ENCODE measurements at regions of chr6 and their contacts with region 1.

Region 1: DNA sequence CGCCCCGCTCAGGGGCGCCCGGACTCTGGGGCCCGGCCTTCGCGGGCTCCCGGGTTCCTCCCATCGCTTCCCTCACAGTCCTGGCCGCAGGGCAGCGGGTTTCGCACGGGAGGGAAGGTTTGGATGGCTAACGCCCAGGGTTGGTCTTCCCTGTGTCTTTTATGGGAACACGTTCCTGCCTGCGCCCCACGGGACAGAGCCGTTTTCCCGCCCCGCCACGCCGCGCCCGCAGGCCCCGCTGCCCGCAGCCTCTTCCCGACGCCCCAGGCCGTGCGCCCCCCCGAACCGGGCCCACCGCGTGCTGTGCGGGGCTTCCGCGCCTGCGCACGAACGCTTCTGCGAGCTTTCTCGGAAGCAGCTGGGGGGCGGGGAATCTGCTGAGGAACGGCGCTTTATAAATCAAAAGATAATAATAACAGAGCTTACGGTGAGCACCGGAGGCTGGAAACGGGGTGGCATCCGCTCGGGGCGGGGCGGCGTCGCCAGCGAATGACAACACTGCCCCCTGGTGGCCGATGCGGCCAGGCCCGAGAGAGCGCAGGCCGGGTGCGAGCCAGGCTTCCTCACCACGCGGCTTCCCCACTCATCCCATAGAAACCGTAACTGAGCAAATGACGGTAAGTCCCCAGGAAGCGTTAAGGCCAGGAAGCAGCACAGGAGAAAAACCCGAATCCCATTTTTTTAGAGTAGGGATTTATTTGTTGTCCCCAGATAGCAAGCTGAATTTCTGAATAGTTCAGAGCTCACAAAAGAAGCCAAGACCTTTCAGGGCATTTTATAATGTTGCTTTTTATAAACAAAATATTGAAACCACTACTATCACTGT is 116.4 kb downstream of the MYLK4 start:
- DNase-seq: peak; percentile 93
- H3K4me3 ChIP-seq: peak overlapping the region in 2 of 3 experiments; percentile 13 to 15
- H3K27ac ChIP-seq: peak overlapping the region; percentile 44
- H3K4me1 ChIP-seq: peaks cover 15% of the 10 kb centered on the region
- H3K27me3 ChIP-seq: no peaks in the 10 kb centered on the region
- CTCF ChIP-seq: peak; percentile 98 to 99
- POLR2A ChIP-seq: no peak

Region 2: GRCh38 chr6:1604158-1605030 is 1030.0 kb before region 1 on chr6:
- CTCF ChIA-PET with region 1: interaction called, 22 read pairs
- POLR2A ChIA-PET with region 1: no interaction called
- dilution Hi-C with region 1: no loop called
- intact Hi-C with region 1: loop called (anchors 2 kb)
- DNase-seq: peak; percentile 63
- H3K4me3 ChIP-seq: peak overlapping the region; percentile 33 to 38 (median 36)
- H3K27ac ChIP-seq: no peak overlapping the region
- H3K4me1 ChIP-seq: peaks cover 3% of the 10 kb centered on the region
- H3K27me3 ChIP-seq: peaks cover 12 to 16% of the 10 kb centered on the region in 2 experiments
- CTCF ChIP-seq: peak; percentile 87 to 91
- POLR2A ChIP-seq: no peak

Region 3: GRCh38 chr6:1787894-1788293 is 846.5 kb before region 1 on chr6:
- CTCF ChIA-PET with region 1: no interaction called
- POLR2A ChIA-PET with region 1: no interaction called
- dilution Hi-C with region 1: no loop called
- intact Hi-C with region 1: loop called (anchors 5 kb)
- DNase-seq: peak; percentile 92
- H3K4me3 ChIP-seq: no peak overlapping the region
- H3K27ac ChIP-seq: peak overlapping the region; percentile 84
- H3K4me1 ChIP-seq: peaks cover 45% of the 10 kb centered on the region
- H3K27me3 ChIP-seq: no peaks in the 10 kb centered on the region
- CTCF ChIP-seq: no peak
- POLR2A ChIP-seq: no peak

Region 4: GRCh38 chr6:2196079-2196679 is 438.2 kb before region 1 on chr6:
- CTCF ChIA-PET with region 1: interaction called, 14 read pairs
- POLR2A ChIA-PET with region 1: no interaction called
- dilution Hi-C with region 1: no loop called
- intact Hi-C with region 1: loop called (anchors 1 kb)
- DNase-seq: peak; percentile 88
- H3K4me3 ChIP-seq: no peak overlapping the region
- H3K27ac ChIP-seq: no peak overlapping the region
- H3K4me1 ChIP-seq: peaks cover 11% of the 10 kb centered on the region
- H3K27me3 ChIP-seq: no peaks in the 10 kb centered on the region
- CTCF ChIP-seq: peak; percentile 50 to 53
- POLR2A ChIP-seq: no peak

Region 5: DNA sequence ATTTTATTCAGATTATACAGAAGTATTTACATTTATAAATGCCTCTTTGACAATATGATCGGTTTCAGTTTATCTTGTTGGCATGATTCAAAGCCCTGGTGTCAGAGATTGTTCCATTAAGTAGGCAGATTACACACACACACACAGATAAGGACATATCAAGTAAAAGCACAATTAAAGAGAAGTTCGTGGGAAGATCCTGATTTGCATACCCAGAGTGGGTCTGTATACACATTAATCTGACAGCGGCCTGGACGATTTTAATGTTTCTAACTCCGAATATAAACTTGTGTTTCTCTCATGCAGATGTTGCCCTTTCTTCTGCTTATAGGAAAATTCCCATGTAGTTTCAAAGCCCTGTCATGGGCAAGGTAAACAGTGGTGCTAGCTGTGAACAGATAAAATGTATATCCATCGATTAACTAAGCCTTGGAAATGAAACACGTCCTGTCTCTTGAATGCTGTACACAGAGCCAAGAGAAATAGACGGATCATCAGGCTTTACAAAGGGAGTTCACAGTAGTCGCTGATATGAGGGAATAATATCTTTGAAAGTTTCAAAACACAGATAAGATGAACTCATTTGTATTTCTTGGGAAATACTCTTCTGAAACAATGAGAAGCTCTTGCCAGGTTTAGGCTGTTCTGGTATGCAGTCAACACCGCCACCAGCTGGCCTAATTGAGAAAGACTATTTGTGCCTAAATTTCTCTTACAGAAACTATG is 280.8 kb before region 1 on chr6:
- CTCF ChIA-PET with region 1: interaction called, 52 read pairs
- POLR2A ChIA-PET with region 1: no interaction called
- dilution Hi-C with region 1: no loop called
- intact Hi-C with region 1: loop called (anchors 1 kb)
- DNase-seq: peak; percentile 92
- H3K4me3 ChIP-seq: peak overlapping the region in 1 of 3 experiments; percentile 6
- H3K27ac ChIP-seq: no peak overlapping the region
- H3K4me1 ChIP-seq: peaks cover 6% of the 10 kb centered on the region
- H3K27me3 ChIP-seq: no peaks in the 10 kb centered on the region
- CTCF ChIP-seq: peak; percentile 64 to 66
- POLR2A ChIP-seq: no peak

Region 6: GRCh38 chr6:2579241-2579761 is 55.1 kb before region 1 on chr6:
- CTCF ChIA-PET with region 1: interaction called, 12 read pairs
- POLR2A ChIA-PET with region 1: interaction called, 5 read pairs
- dilution Hi-C with region 1: no loop called
- intact Hi-C with region 1: loop called (anchors 1 kb)
- DNase-seq: peak; percentile 21
- H3K4me3 ChIP-seq: no peak overlapping the region
- H3K27ac ChIP-seq: peak overlapping the region; percentile 69
- H3K4me1 ChIP-seq: peaks cover 44% of the 10 kb centered on the region
- H3K27me3 ChIP-seq: no peaks in the 10 kb centered on the region
- CTCF ChIP-seq: no peak
- POLR2A ChIP-seq: no peak

Region 7: GRCh38 chr6:2749969-2750600 is 115.7 kb after region 1 on chr6:
- CTCF ChIA-PET with region 1: interaction called, 19 read pairs
- POLR2A ChIA-PET with region 1: no interaction called
- dilution Hi-C with region 1: no loop called
- intact Hi-C with region 1: loop called (anchors 1 kb)
- DNase-seq: peak; percentile 65
- H3K4me3 ChIP-seq: no peak overlapping the region
- H3K27ac ChIP-seq: no peak overlapping the region
- H3K4me1 ChIP-seq: no peaks in the 10 kb centered on the region
- H3K27me3 ChIP-seq: no peaks in the 10 kb centered on the region
- CTCF ChIP-seq: peak; percentile 75 to 85
- POLR2A ChIP-seq: no peak

Region 8: DNA sequence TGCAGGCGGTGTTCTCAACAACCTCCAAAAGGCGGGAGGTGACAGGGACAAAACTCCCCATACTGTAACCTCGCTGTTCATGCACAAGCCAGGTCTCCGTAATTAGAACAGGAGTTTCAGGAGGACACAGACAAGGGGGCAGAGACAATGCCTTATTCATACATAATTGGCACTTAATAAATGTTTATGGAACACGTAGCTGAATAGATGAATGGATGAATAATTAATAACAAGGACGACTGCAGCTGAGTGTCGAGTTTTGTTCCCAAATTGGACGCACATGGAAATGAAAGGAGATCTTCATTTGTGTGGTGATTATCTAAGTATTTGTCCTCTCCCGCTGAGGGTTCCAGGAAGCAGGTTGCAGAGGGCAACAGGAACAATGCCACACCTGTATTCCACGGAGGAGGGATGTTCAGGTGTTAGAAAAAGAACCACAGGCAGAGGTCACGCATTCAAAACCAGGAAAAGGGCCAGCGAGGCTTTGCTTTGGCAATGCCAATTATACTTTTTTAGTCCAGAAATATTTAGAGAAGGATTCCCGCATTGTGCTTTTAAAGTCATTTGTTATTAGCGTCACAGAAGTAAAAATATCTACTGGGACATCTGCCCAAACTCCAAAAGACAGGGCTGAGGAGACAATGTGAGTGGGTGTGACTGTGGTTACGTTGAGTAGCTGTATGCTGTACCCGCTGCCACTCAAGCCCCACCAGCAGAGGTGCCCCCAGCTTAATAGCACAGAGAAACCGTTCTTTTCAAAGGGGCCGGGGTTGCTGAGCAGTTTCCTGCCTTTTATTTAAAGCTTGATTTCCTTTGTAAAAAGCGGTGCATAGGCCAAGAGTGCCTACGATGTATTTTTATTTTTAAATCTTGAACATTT is 993.8 kb after region 1 on chr6:
- CTCF ChIA-PET with region 1: no interaction called
- POLR2A ChIA-PET with region 1: no interaction called
- dilution Hi-C with region 1: no loop called
- intact Hi-C with region 1: no loop called
- DNase-seq: peak; percentile 14
- H3K4me3 ChIP-seq: no peak overlapping the region
- H3K27ac ChIP-seq: no peak overlapping the region
- H3K4me1 ChIP-seq: no peaks in the 10 kb centered on the region
- H3K27me3 ChIP-seq: peaks cover 11% of the 10 kb centered on the region in 2 experiments
- CTCF ChIP-seq: no peak
- POLR2A ChIP-seq: no peak